Activated naive CD4-positive, alpha-beta T cell treated with anti-CD3 and anti-CD28 coated beads, Interleukin-2, amount 10 ng/mL, durations not matched to agents 7 days and 5 days (primary cell): ENCODE measurements at regions of chr22 and their contacts with region 1.

Region 1: DNA sequence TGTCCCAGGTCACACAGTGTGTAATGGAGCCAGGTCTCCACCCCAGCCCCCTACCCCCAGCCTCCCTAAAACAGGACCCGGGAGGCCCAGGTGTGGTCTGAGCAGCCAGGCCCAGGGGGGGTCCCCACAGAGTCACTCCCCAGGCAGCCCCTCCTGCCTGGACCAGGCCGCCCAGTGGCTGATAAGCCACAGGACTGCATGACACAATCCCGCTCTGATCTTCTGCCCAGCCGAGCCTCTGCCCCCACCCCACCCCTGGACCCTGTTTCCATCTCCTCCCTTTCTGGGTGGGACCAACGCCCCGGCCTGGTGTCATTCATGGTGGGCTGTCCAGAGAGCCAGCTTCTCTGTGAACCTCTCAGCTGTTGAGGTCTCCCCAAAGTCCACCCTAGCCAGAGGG is 7.8 kb upstream of the LIF start:
- DNase-seq: no peak
- H3K4me3 Mint-ChIP-seq: no peak overlapping the region
- H3K27ac Mint-ChIP-seq: no peak overlapping the region
- H3K4me1 Mint-ChIP-seq: peaks cover 63% of the 10 kb centered on the region
- H3K27me3 Mint-ChIP-seq: no peaks in the 10 kb centered on the region

Region 2: GRCh38 chr22:29635734-29636357 is 618.5 kb before region 1 on chr22:
- CTCF ChIA-PET with region 1: interaction called, 11 read pairs
- DNase-seq: no peak
- H3K4me3 Mint-ChIP-seq: no peak overlapping the region
- H3K27ac Mint-ChIP-seq: no peak overlapping the region
- H3K4me1 Mint-ChIP-seq: peaks cover 20% of the 10 kb centered on the region
- H3K27me3 Mint-ChIP-seq: no peaks in the 10 kb centered on the region